Panc1 (cell line): ENCODE measurements at regions of chr6 and their contacts with region 1.

Region 1: DNA sequence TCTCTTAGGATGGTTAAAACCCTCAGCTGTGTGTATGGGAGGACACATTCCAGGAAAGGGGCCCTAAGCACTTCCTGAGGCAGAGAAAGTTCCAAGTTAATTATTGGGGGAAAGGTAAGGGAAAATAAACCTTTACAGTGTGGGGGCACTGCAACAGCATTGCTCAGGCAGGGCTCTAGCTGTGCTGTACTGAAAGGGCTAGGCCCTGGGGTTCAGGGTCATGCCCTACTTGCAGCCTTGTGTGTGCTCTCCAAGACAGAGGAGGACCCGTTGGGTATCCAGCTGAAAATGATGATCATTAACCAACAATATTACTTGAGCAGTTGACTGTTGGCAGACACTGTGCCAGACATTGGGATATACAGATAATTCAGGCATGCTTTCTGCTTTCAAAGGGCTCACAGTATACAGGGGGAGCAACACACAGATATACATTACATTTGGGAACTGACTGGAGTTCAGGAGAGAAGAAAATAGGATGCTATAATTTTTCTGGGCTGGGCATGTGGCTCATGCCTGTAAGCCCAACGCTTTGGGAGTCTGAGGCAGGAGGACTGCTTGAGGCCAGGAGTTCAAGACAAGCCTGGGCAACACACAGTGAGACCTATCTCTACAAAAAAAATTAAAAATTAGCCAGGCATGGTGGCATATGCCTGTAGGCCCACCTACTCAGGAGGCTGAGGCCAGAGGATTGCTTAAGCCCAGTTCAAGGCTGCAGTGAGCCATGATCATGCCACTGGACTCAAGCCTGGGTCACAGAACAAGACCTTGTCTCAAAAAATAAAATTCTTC is 9.1 kb upstream of the RPL7L1 start:
- DNase-seq: no peak
- ATAC-seq: peak; percentile 60; the same call in 1 of the 2 replicates
- H3K4me3 ChIP-seq: no peak overlapping the region
- H3K27ac ChIP-seq: no peak overlapping the region
- H3K4me1 ChIP-seq: no peaks in the 10 kb centered on the region
- H3K27me3 ChIP-seq: no peaks in the 10 kb centered on the region
- CTCF ChIP-seq: no peak

Region 2: DNA sequence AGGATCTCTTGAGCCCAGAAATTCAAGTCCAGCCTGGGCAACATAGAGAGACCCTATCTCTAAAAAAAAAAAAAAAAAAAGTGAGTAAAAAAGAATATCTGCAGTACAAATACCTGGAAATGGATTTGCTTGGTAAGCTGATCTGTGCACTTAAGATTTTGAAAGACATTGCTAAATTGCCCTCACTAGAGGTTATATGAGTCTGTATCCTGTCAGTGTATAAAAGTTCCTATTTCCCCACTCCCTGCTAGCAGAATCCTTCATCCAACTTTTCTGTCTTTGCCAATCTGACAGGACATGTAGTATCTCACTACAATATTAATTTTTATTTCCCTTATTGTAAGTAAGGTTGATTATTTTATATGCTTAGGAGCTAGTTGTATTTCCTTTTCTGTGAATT is 52.4 kb before region 1 on chr6:
- CTCF ChIA-PET with region 1: no interaction called
- POLR2A ChIA-PET with region 1: interaction called, 11 read pairs
- in situ Hi-C with region 1: no loop called
- intact Hi-C with region 1: no loop called
- DNase-seq: no peak
- ATAC-seq: no peak
- H3K4me3 ChIP-seq: no peak overlapping the region
- H3K27ac ChIP-seq: no peak overlapping the region
- H3K4me1 ChIP-seq: no peaks in the 10 kb centered on the region
- H3K27me3 ChIP-seq: no peaks in the 10 kb centered on the region
- CTCF ChIP-seq: no peak

Region 3: GRCh38 chr6:43308101-43308989 is 438.0 kb after region 1 on chr6 and contains the start of gene CRIP3:
- CTCF ChIA-PET with region 1: no interaction called
- POLR2A ChIA-PET with region 1: no interaction called
- in situ Hi-C with region 1: no loop called
- intact Hi-C with region 1: no loop called
- DNase-seq: peak; percentile 20
- ATAC-seq: peak; percentile 92
- H3K4me3 ChIP-seq: peak within 1 kb of the TSS; percentile 43 to 60
- H3K27ac ChIP-seq: no peak within 1 kb of the TSS
- H3K4me1 ChIP-seq: no peaks in the 10 kb centered on the region
- H3K27me3 ChIP-seq: peaks cover 2% of the 10 kb centered on the region; the same call in 1 of the 2 replicates
- CTCF ChIP-seq: peak; percentile 44
- total RNA-seq, gene CRIP3: 0.64 TPM